Esophagus muscularis mucosa (tissue), 4 donors: ENCODE measurements at regions of chr20 and their contacts with region 1.

Region 1: DNA sequence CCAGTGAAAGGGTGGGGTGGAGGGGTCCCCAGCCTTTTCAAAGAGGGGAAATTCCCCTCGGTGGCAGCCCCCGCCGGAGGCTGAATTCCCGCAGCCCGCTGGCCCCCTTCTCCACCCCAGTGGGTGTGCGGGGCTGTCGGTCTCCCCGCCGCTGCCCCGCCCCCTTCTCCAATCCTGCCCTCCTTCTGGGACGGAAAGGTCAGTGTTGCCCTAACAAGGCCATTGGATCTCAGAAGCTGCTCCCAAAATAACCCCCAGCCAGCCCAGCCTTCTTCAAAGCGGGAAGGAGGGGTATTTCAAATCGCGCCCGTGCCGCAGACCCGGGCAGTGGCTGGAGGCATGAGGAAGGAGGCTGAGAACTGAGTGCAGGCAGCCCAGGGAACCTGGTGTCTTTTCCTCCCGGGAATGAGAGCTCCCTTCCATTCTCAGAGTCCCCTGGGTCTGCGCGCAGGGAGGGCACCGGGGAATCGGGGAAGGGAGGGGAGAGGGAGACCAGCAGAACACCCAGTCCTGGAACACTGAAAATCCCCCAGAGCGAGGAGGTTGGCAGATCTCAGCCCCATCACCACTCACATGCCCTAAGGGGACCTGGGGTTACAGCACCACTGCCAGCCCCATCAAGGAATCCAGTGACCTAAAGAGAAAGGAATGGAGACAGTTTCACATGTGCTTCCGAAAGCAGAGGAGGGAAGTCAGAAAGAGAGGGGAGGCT is at the start of gene JPH2:
- DNase-seq: peak; percentile 94
- H3K4me3 ChIP-seq: peak within 1 kb of the TSS; percentile 58 to 80 (median 72)
- H3K27ac ChIP-seq: peak within 1 kb of the TSS; percentile 90 to 98 (median 96)
- H3K4me1 ChIP-seq: peaks cover 24 to 52% (median 42%) of the 10 kb centered on the region in 4 donors
- H3K27me3 ChIP-seq: no peaks in the 10 kb centered on the region
- CTCF ChIP-seq: no peak
- EP300 ChIP-seq: peak; percentile 89
- POLR2A ChIP-seq: peak; percentile 37
- total RNA-seq, gene JPH2: 187 to 441 (median 295) TPM

Region 2: GRCh38 chr20:44115762-44116644 is 71.2 kb before region 1 on chr20:
- intact Hi-C with region 1: loop called (anchors 2 kb)
- DNase-seq: no peak
- H3K4me3 ChIP-seq: no peak overlapping the region
- H3K27ac ChIP-seq: peak overlapping the region; percentile 71 to 81 (median 75)
- H3K4me1 ChIP-seq: peaks cover 32 to 93% (median 90%) of the 10 kb centered on the region in 4 donors
- H3K27me3 ChIP-seq: peaks cover 0 to 15% (median 7%) of the 10 kb centered on the region in 4 donors
- CTCF ChIP-seq: no peak
- EP300 ChIP-seq: no peak
- POLR2A ChIP-seq: no peak

Region 3: DNA sequence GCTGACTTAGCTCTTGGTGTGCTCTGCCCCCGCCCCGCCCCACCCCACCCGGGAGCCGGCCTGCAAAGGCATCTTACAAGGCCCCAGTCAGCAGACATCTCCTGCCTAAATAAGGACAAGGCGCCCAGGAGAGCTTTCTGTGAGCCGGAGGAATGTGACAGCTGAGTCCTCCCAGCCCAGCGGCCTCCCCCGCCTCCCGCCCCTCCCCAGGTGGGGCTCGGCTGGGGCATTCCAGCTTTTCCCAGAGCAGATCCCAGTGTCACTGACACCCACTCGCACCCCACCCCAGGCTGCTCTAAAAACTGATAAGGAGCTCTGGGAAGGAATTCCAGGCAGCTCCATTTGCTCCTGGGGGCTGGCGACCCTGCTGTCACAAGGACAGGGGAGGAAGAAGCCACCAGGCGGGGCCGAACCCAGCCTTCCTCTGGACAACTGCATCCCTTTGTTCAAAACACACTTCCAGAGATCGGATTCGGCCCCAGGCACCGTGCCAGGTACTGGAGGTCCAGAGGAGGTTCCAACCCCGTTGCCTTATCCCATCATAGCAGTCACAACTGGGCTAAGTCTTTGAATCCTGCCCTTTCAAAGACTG is 49.9 kb before region 1 on chr20:
- intact Hi-C with region 1: loop called (anchors 5 kb)
- DNase-seq: no peak
- H3K4me3 ChIP-seq: peak overlapping the region in 3 of 4 donors; percentile 28 to 33 (median 29)
- H3K27ac ChIP-seq: peak overlapping the region; percentile 85 to 95 (median 92)
- H3K4me1 ChIP-seq: peaks cover 57 to 84% (median 80%) of the 10 kb centered on the region in 4 donors
- H3K27me3 ChIP-seq: no peaks in the 10 kb centered on the region
- CTCF ChIP-seq: no peak
- EP300 ChIP-seq: peak; percentile 23
- POLR2A ChIP-seq: no peak

Region 4: GRCh38 chr20:44302026-44302669 is 114.9 kb after region 1 on chr20:
- intact Hi-C with region 1: no loop called
- DNase-seq: no peak
- H3K4me3 ChIP-seq: no peak overlapping the region
- H3K27ac ChIP-seq: no peak overlapping the region
- H3K4me1 ChIP-seq: peaks cover 0 to 10% (median 0%) of the 10 kb centered on the region in 4 donors
- H3K27me3 ChIP-seq: no peaks in the 10 kb centered on the region
- CTCF ChIP-seq: no peak
- EP300 ChIP-seq: no peak
- POLR2A ChIP-seq: no peak